ENCODE measurements at regions of chr1 and their contacts with region 1.

Region 1: GRCh38 chr1:157580179-157580827 is 17.6 kb downstream of the FCRL4 start:
- DNase-seq: peak; percentile 57
- ATAC-seq: peak; percentile 71
- H3K4me3 ChIP-seq: no peak overlapping the region
- H3K27ac ChIP-seq: no peak overlapping the region
- H3K4me1 ChIP-seq: no peaks in the 10 kb centered on the region
- H3K27me3 ChIP-seq: no peaks in the 10 kb centered on the region
- CTCF ChIP-seq: peak; percentile 60
- POLR2A ChIP-seq: no peak
- RAD21 ChIP-seq: peak; percentile 36

Region 2: GRCh38 chr1:156641761-156642264 is 938.5 kb before region 1 on chr1 and contains the start of gene BCAN:
- CTCF ChIA-PET with region 1: no interaction called
- POLR2A ChIA-PET with region 1: no interaction called
- dilution Hi-C with region 1: no loop called
- in situ Hi-C with region 1: no loop called
- intact Hi-C with region 1: no loop called
- DNase-seq: peak; percentile 19
- ATAC-seq: peak; percentile 72
- H3K4me3 ChIP-seq: no peak within 1 kb of the TSS; the same call in 1 of the 2 replicates
- H3K27ac ChIP-seq: no peak within 1 kb of the TSS
- H3K4me1 ChIP-seq: no peaks in the 10 kb centered on the region; the same call in 1 of the 2 replicates
- H3K27me3 ChIP-seq: peaks cover 92% of the 10 kb centered on the region
- CTCF ChIP-seq: no peak
- POLR2A ChIP-seq: no peak
- RAD21 ChIP-seq: no peak
- total RNA-seq, gene BCAN: not detected in 2 replicates

Region 3: DNA sequence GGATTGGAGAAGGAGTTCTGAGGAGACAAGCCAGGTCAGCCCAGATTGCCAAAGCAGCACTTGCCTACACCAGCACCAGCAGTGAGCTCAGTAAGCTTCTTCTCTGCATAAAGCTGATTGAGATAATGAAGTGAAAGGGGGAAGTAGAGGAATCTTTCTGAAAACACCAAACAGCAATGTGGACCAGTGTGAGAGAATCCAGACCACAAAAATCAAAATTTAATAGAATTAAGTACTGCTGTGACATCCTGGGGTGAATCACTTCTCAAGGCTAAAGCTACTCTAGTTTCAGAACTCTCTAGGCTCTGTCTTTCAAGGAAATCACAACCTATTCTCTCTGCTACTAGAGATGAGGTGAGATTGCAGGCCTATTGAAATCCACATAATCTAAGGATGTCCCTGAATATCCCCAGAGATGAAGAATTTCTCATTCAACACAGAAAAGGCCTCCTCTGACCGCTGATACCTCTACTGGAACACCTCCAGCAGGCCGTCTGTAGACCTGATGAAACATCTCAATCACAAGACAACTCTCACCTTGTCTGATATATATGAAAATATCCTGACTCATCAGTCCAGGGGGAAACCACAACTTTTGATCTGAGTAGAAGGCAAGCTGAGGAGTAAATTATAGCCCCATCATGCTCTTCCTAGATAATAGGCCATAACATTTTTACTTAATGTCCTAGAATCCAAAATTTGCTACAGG is 17.8 kb after region 1 on chr1 and contains the start of gene FCRL4:
- CTCF ChIA-PET with region 1: interaction called, 11 read pairs
- POLR2A ChIA-PET with region 1: no interaction called
- dilution Hi-C with region 1: no loop called
- in situ Hi-C with region 1: no loop called
- intact Hi-C with region 1: no loop called
- DNase-seq: no peak
- ATAC-seq: no peak
- H3K4me3 ChIP-seq: no peak within 1 kb of the TSS
- H3K27ac ChIP-seq: no peak within 1 kb of the TSS
- H3K4me1 ChIP-seq: no peaks in the 10 kb centered on the region
- H3K27me3 ChIP-seq: no peaks in the 10 kb centered on the region
- CTCF ChIP-seq: no peak
- POLR2A ChIP-seq: no peak
- RAD21 ChIP-seq: no peak
- total RNA-seq, gene FCRL4: not detected in 2 replicates

Region 4: DNA sequence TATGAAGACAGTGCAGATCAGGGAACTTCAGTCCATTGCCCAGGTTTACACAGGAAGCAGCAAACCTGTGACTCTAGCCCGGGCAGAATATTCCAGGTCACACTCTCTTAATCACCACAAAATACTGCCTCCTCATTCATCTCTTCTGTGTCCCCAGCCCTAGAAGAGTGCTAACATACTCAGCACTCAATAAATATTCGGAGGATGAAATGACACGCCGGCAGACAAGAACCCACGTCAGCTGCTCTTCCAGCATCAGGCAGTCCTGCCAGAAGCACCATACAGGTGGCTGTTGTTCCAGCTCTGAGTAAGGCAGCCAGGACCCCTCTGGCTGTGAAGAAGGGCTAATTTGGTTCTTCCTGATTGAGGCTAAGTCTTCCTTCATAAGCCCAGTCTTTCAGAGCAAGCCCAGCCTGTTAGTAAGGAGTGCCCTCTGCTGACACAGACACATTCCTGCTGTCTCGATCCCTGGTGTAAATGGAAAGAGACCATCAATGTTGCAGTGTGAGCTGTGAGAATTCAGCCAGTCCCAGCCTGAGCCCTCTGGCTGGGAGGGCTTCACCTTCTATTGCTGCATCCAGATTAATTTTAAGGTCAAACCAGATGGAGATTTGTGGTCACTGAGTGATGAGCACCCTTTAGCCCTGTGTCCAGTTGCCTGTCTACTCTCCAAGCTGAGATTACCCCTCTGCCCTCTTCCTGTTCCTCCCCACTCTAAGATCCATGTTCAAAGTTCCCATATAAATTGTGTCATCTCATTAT is 368.2 kb after region 1 on chr1:
- CTCF ChIA-PET with region 1: no interaction called
- POLR2A ChIA-PET with region 1: no interaction called
- dilution Hi-C with region 1: no loop called
- in situ Hi-C with region 1: no loop called
- intact Hi-C with region 1: loop called (anchors 5 kb)
- DNase-seq: peak; percentile 42
- ATAC-seq: peak; percentile 81
- H3K4me3 ChIP-seq: no peak overlapping the region
- H3K27ac ChIP-seq: no peak overlapping the region
- H3K4me1 ChIP-seq: no peaks in the 10 kb centered on the region
- H3K27me3 ChIP-seq: peaks cover 13% of the 10 kb centered on the region
- CTCF ChIP-seq: peak; percentile 49
- POLR2A ChIP-seq: no peak
- RAD21 ChIP-seq: peak; percentile 60

Region 5: GRCh38 chr1:158131217-158131616 is 550.9 kb after region 1 on chr1:
- CTCF ChIA-PET with region 1: no interaction called
- POLR2A ChIA-PET with region 1: no interaction called
- dilution Hi-C with region 1: no loop called
- in situ Hi-C with region 1: loop called (anchors 10 kb)
- intact Hi-C with region 1: no loop called
- DNase-seq: no peak
- ATAC-seq: no peak
- H3K4me3 ChIP-seq: no peak overlapping the region
- H3K27ac ChIP-seq: no peak overlapping the region
- H3K4me1 ChIP-seq: no peaks in the 10 kb centered on the region
- H3K27me3 ChIP-seq: peaks cover 18% of the 10 kb centered on the region
- CTCF ChIP-seq: no peak
- POLR2A ChIP-seq: no peak
- RAD21 ChIP-seq: no peak